Activated CD8-positive, alpha-beta T cell treated with anti-CD3 and anti-CD28 coated beads, Interleukin-2, amount 10 ng/mL, durations not matched to agents 7 days and 5 days (primary cell): ENCODE measurements at regions of chr17 and their contacts with region 1.

Region 1: GRCh38 chr17:45021607-45022287 is 29.7 kb downstream of the DCAKD start:
- DNase-seq: peak; percentile 68
- ATAC-seq: peak; percentile 82
- H3K4me3 Mint-ChIP-seq: no peak overlapping the region
- H3K27ac Mint-ChIP-seq: no peak overlapping the region
- H3K4me1 Mint-ChIP-seq: peaks cover 23% of the 10 kb centered on the region
- H3K27me3 Mint-ChIP-seq: peaks cover 34% of the 10 kb centered on the region

Region 2: DNA sequence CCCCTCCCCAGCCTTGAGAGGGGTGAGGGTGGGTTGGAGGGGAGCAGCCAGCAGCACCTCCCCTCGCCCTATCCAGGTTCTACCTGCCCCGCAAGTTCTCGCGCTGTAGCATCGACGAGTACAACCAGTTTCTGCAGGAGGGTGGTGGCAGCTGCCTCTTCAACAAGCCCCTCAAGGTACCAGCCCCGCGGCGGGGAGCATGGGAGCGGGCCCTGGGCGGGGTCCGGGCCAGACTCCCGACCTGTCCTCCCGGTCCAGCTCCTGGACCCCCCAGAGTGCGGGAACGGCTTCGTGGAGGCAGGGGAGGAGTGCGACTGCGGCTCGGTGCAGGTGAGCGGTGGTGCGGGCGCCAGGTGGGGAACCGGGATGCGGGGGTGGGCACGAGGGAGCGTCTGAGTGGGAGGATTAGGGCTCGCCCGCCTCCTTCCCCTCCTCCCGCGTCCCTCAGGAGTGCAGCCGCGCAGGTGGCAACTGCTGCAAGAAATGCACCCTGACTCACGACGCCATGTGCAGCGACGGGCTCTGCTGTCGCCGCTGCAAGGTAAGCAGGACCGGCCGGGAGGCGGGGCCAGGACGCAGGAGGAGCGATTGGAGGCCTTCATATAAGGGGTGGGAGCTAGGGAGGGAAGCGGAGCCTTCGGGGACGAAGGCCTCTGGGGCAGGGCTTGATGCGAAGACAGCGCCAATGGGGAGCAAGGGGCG is 246.5 kb before region 1 on chr17:
- CTCF ChIA-PET with region 1: interaction called, 13 read pairs
- POLR2A ChIA-PET with region 1: no interaction called
- DNase-seq: peak; percentile 99
- ATAC-seq: peak; percentile 97
- H3K4me3 Mint-ChIP-seq: peak overlapping the region; percentile 76
- H3K27ac Mint-ChIP-seq: peak overlapping the region; percentile 81
- H3K4me1 Mint-ChIP-seq: peaks cover 16% of the 10 kb centered on the region
- H3K27me3 Mint-ChIP-seq: peaks cover 6% of the 10 kb centered on the region

Region 3: DNA sequence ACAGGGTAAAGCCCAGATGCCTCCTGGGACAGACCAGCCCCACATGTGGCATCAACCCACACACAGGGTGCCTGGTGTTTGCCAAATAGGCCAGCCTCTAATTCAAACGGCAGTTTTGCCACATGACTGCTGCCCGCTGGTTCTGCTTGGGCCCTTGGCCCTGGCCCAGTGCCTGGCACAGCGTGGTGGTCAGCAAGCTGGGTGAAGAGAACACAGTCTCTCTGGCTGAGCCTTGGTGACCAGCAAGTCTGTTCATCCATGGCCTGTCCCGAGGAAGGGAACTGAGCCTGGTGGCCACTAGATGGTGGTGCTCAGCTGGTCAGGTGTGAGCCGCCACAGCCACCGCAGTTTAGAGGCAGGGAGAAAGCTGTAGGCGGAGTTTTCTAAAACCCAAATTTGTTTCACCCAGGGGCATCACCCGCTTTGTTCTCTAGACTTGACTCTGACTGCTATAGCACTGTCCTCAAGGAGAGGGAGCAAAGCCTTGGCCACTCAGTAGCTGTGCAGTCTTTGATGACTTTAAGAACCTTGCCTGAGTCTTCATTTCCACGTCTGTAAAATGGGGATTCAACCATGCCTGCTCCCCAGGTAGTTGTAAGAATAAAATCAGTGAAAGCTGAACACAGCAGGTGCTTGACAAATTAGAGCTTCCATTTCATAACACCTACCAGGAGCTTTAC is 101.7 kb before region 1 on chr17:
- CTCF ChIA-PET with region 1: interaction called, 78 read pairs
- POLR2A ChIA-PET with region 1: no interaction called
- DNase-seq: peak; percentile 76
- ATAC-seq: peak; percentile 84
- H3K4me3 Mint-ChIP-seq: no peak overlapping the region
- H3K27ac Mint-ChIP-seq: no peak overlapping the region
- H3K4me1 Mint-ChIP-seq: peaks cover 6% of the 10 kb centered on the region
- H3K27me3 Mint-ChIP-seq: peaks cover 11% of the 10 kb centered on the region

Region 4: DNA sequence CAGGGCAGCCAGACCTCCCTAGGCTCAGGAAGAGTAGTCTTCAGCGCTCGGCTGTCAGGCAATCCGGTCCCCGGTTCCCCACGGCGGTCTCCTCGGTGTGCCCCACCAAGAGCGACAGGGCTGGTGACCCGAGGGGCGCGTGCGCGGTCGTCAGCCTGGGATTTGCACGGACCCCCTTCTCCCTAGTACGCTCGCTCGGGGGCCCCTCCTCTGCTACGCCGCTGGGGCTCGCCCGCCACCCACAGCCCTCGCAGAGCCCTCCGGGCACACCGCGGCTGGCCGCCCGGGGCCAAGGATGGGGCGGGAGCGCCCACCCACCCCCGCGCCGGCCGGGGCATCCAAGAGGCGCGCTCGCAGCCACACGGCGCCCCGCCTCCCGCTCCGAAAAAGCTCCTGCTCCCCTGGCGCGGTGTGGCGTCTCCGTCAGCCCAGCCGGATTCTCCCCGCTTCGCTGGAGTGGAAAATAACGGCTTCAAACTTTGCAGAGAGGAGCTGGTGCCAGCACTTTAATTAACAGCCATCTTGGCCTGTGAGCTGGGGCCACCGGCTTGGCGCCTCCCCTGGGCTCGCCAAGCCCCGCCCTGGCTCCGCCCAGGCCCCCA is 51.5 kb before region 1 on chr17:
- CTCF ChIA-PET with region 1: interaction called, 10 read pairs
- POLR2A ChIA-PET with region 1: interaction called, 3 read pairs
- DNase-seq: no peak
- ATAC-seq: peak; percentile 4
- H3K4me3 Mint-ChIP-seq: peak overlapping the region; percentile 59
- H3K27ac Mint-ChIP-seq: no peak overlapping the region
- H3K4me1 Mint-ChIP-seq: peaks cover 31% of the 10 kb centered on the region
- H3K27me3 Mint-ChIP-seq: peaks cover 66% of the 10 kb centered on the region

Region 5: DNA sequence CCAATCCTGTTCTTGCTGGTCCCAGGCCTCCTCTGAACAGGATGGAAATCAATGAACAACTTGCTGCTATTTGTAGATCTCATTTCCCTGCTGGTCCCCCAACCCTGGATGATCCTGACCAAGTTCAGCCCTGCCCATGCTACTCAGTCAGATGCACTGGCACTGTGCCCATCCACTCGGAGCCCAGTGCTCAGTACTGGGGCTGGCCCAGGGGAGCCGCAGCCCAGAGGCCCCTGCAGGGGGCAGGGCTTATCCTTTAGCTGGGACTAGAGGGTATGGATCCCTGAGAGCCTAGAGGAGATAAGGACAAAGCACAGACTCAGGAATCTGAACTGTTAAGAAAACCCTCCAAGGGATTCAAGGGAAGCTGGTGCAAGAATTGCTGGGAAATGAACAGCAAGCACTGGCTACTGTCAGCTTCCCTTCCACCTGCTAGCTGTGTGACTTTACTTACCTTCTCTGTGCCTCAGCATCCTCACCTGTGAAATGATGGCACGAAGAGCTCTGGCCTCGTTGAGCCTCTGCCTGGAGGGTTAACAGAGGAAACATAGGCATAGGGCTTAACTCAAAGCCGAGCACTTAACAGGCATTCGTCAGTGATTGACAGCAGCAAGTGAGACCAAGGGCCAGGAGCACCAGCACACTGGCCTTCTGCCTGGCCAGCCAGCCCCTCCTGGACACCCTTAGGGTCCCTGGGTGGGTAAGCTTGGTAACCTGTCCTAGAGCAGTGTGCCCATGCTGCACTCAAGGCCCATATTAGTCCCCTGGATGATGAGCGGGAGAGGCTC is 23.8 kb before region 1 on chr17:
- CTCF ChIA-PET with region 1: interaction called, 24 read pairs
- POLR2A ChIA-PET with region 1: no interaction called
- DNase-seq: no peak
- ATAC-seq: no peak
- H3K4me3 Mint-ChIP-seq: no peak overlapping the region
- H3K27ac Mint-ChIP-seq: no peak overlapping the region
- H3K4me1 Mint-ChIP-seq: no peaks in the 10 kb centered on the region
- H3K27me3 Mint-ChIP-seq: peaks cover 18% of the 10 kb centered on the region

Region 6: GRCh38 chr17:45051060-45051719 is 29.4 kb after region 1 on chr17 and contains the start of gene DCAKD:
- CTCF ChIA-PET with region 1: interaction called, 40 read pairs
- POLR2A ChIA-PET with region 1: no interaction called
- DNase-seq: peak; percentile 94
- ATAC-seq: peak; percentile 98
- H3K4me3 Mint-ChIP-seq: peak within 1 kb of the TSS; percentile 97
- H3K27ac Mint-ChIP-seq: peak within 1 kb of the TSS; percentile 97
- H3K4me1 Mint-ChIP-seq: peaks cover 48% of the 10 kb centered on the region
- H3K27me3 Mint-ChIP-seq: no peaks in the 10 kb centered on the region
- total RNA-seq, gene DCAKD: 32.9 to 33.7 TPM

Region 7: GRCh38 chr17:45110668-45111611 is 89.2 kb after region 1 on chr17:
- CTCF ChIA-PET with region 1: no interaction called
- POLR2A ChIA-PET with region 1: no interaction called
- DNase-seq: no peak
- ATAC-seq: no peak
- H3K4me3 Mint-ChIP-seq: no peak overlapping the region
- H3K27ac Mint-ChIP-seq: no peak overlapping the region
- H3K4me1 Mint-ChIP-seq: no peaks in the 10 kb centered on the region
- H3K27me3 Mint-ChIP-seq: no peaks in the 10 kb centered on the region